Sigmoid colon (tissue), 7 donors: ENCODE measurements at regions of chr14 and their contacts with region 1.

Region 1: GRCh38 chr14:72904840-72905561 is 11.1 kb upstream of the DPF3 start:
- DNase-seq: peak; percentile 79
- H3K4me3 ChIP-seq: no peak overlapping the region
- H3K27ac ChIP-seq: no peak overlapping the region
- H3K4me1 ChIP-seq: peaks cover 0 to 21% (median 5%) of the 10 kb centered on the region in 4 donors
- H3K27me3 ChIP-seq: peaks cover 0 to 4% (median 0%) of the 10 kb centered on the region in 3 donors
- CTCF ChIP-seq: peak; percentile 78 to 92 (median 88)
- EP300 ChIP-seq: no peak
- POLR2A ChIP-seq: no peak

Region 2: GRCh38 chr14:72516936-72517700 is 387.9 kb before region 1 on chr14:
- intact Hi-C with region 1: loop called (anchors 1 kb)
- DNase-seq: no peak
- H3K4me3 ChIP-seq: no peak overlapping the region
- H3K27ac ChIP-seq: no peak overlapping the region
- H3K4me1 ChIP-seq: peaks cover 0 to 3% (median 0%) of the 10 kb centered on the region in 4 donors
- H3K27me3 ChIP-seq: no peaks in the 10 kb centered on the region
- CTCF ChIP-seq: peak; percentile 71 to 92 (median 82)
- EP300 ChIP-seq: no peak
- POLR2A ChIP-seq: no peak

Region 3: DNA sequence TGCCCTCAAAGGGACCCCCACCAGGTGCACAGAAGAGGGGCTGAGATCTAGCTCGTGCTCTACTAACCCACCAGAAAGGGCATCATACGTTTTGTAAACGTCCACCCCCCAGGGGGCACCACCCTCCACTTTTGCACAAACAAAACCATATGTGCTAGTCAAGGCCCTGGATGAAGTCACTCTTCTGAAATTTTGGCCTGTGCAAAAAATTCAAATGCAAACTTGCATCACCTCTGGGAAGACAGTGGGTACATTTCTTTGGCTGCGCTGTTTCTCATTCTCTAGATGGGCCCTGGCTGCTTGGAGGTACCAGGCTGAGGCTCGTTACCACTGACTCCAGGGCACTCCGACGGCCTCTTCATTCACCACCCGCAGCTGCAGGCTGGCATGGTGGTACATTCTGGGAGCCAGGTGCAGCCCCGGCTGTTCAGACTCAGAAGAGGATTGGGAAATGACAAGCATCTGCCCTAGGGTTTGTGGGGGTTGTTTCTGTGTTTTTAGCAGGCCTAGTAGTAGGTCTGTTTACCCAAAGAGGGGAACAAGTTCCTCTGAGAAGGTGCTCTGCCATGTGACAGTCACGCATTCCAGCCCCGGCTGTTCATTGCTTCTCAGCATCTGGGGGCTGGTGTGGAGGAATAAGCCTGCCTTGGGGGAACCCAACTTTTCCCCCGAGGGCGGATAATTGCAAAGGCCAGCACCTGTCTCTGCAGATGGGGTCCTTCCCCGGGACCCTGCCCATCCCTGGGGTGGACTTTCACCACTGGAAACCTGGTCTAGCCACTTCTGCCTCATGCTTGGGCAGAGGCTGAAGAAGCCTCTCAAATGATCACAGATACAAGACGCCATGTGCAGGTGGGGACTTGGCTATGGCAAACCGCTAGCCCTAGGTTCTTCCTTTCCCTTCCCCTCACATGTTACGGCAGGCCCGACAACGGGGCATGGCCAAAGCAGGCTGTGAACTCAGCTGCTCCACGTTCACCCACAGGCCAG is 158.7 kb before region 1 on chr14:
- intact Hi-C with region 1: loop called (anchors 10 kb)
- DNase-seq: no peak
- H3K4me3 ChIP-seq: no peak overlapping the region
- H3K27ac ChIP-seq: peak overlapping the region in 1 of 4 donors; percentile 21
- H3K4me1 ChIP-seq: no peaks in the 10 kb centered on the region
- H3K27me3 ChIP-seq: no peaks in the 10 kb centered on the region
- CTCF ChIP-seq: no peak
- EP300 ChIP-seq: no peak
- POLR2A ChIP-seq: no peak

Region 4: DNA sequence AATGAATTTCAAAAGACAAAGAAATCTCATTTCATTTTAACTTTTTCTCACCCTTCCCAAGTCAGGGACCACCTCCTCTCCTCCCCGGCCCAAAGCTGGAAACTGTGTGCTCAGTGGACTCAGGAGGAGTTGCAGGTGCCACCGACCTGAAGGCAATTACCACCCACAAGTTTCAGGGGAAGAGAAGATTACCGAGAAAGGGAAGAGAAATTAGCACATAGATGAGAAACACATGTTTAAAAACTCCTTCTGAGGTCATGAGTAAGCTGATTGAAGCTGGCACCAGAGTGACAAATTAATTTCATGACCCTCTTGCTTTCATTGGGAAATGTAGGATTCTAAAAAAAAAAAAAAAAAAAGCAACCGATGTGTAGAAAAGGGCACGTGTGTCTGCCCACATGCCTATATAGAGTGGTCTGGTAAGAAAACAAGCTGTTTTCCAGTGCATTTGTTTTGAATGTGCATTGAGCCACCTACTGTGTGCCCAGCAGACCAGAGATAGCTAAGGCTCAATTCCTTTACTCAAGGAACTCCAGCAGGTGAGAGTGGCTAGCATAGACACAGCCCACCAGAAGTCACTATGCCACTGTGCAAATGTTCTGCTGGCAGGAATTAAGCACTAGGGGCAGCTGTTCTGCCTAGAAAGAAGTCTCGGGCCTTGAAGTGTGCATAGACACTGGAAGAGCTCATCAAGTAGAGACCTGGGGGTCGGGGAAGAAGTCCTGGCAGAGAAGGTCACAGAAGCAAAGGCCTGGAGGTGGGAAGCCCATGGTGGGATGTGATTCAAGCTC is 41.6 kb before region 1 on chr14:
- intact Hi-C with region 1: no loop called
- DNase-seq: no peak
- H3K4me3 ChIP-seq: no peak overlapping the region
- H3K27ac ChIP-seq: no peak overlapping the region
- H3K4me1 ChIP-seq: no peaks in the 10 kb centered on the region
- H3K27me3 ChIP-seq: no peaks in the 10 kb centered on the region
- CTCF ChIP-seq: no peak
- EP300 ChIP-seq: no peak
- POLR2A ChIP-seq: no peak

Region 5: GRCh38 chr14:72920015-72920414 is 15.0 kb after region 1 on chr14:
- intact Hi-C with region 1: no loop called
- DNase-seq: no peak
- H3K4me3 ChIP-seq: no peak overlapping the region
- H3K27ac ChIP-seq: no peak overlapping the region
- H3K4me1 ChIP-seq: peaks cover 0 to 21% (median 2%) of the 10 kb centered on the region in 4 donors
- H3K27me3 ChIP-seq: no peaks in the 10 kb centered on the region
- CTCF ChIP-seq: no peak
- EP300 ChIP-seq: no peak
- POLR2A ChIP-seq: no peak